Esophagus muscularis mucosa (tissue), 4 donors: ENCODE measurements at regions of chr15 and their contacts with region 1.

Region 1: DNA sequence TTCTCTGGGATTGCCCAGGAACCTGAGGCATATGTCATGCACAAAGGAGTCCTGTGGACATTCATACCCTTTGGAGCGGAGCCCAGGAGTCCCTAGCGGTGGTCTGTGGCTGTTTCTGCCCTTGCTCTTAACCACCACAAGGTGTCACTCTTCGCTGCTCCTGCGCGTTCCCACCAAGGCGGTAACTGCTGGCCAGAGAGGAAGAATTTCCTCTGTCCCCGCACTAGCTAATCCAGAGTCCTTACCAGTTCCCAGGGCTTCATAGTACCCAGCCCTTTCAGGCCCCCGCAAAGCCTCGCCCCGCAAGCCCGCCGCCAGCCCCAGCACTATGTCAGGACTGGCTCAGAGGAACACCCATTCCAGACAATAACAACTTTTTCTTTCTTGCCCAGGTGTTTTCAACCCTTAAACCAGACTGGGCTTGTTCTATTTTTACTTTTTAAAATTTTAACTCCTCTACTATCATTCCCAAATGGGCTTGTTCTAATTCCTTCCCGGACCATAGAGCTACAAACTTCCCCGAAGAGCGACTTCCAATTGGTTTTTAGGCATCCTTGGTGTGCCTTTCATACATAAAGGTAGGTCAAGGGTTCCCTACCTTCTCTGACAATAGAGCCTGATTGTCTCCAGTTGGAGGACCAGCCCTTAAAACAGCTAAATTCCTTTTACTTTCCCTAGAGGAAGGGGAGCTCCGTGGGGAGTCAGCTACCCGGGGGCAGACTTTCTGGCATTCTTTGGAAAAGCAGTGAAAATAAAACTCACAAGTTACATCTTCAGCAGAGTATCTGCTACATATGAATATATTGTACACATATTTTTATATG is 31.8 kb upstream of the ZNF774 start:
- DNase-seq: peak; percentile 93
- H3K4me3 ChIP-seq: peak overlapping the region in 1 of 4 donors; percentile 25
- H3K27ac ChIP-seq: peak overlapping the region; percentile 0 to 49 (median 30)
- H3K4me1 ChIP-seq: peaks cover 21 to 32% (median 30%) of the 10 kb centered on the region in 4 donors
- H3K27me3 ChIP-seq: no peaks in the 10 kb centered on the region
- CTCF ChIP-seq: peak; percentile 97 to 98 (median 98)
- EP300 ChIP-seq: no peak
- POLR2A ChIP-seq: no peak

Region 2: GRCh38 chr15:90138071-90138833 is 182.0 kb before region 1 on chr15:
- intact Hi-C with region 1: no loop called
- DNase-seq: no peak
- H3K4me3 ChIP-seq: no peak overlapping the region
- H3K27ac ChIP-seq: peak overlapping the region; percentile 4 to 56 (median 42)
- H3K4me1 ChIP-seq: peaks cover 8 to 18% (median 14%) of the 10 kb centered on the region in 4 donors
- H3K27me3 ChIP-seq: no peaks in the 10 kb centered on the region
- CTCF ChIP-seq: no peak
- EP300 ChIP-seq: no peak
- POLR2A ChIP-seq: no peak

Region 3: DNA sequence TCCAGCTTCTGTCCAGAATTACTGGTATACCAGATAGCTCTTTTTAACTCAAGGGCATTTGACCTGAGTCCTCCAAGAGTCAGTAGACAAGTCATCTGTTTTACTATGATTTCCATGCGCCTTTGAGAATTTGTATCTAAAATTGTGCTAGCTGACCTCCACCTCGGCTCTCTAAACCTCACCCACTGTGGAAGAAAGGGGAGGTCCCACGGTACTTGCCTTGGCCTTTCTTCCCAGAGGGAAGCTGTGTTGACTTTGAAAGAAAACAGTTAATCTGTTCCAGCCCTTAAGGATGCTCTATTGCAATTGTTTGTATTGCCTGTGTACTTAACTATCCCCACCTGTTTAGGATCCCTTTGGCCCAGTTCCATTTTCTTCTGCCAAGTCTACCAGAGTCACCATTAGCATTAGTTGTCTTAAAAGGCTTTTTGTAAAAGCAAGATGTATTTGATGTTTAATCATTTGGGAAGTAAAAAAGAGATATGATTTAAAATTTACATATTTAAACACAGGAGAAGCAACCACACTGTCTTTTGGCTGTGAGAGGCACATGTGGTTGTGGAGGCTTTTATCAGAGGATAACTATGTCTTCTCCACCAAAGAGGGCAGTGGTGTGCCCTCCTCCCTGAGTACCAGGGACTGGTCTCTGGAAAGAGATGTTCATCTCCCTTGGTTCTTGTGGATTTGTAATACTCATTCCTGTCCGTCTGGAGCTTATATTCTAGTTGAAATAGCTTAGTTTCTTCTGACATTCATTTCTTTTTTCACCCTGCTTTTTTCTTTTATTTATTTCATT is 298.3 kb after region 1 on chr15:
- intact Hi-C with region 1: loop called (anchors 10 kb)
- DNase-seq: no peak
- H3K4me3 ChIP-seq: no peak overlapping the region
- H3K27ac ChIP-seq: peak overlapping the region in 3 of 4 donors; percentile 5 to 61 (median 38)
- H3K4me1 ChIP-seq: peaks cover 3 to 34% (median 25%) of the 10 kb centered on the region in 4 donors
- H3K27me3 ChIP-seq: no peaks in the 10 kb centered on the region
- CTCF ChIP-seq: no peak
- EP300 ChIP-seq: no peak
- POLR2A ChIP-seq: no peak